ENCODE measurements at regions of chr6 and their contacts with region 1.

Region 1: GRCh38 chr6:52284460-52285176 is at the start of gene MCM3:
- H3K4me3 Mint-ChIP-seq: no peak within 1 kb of the TSS
- H3K27ac Mint-ChIP-seq: no peak within 1 kb of the TSS
- H3K4me1 Mint-ChIP-seq: peaks cover 13% of the 10 kb centered on the region
- H3K27me3 Mint-ChIP-seq: no peaks in the 10 kb centered on the region

Region 2: GRCh38 chr6:52304983-52305390 is 20.4 kb after region 1 on chr6:
- intact Hi-C with region 1: loop called (anchors 1 kb)
- H3K4me3 Mint-ChIP-seq: peak overlapping the region; percentile 26
- H3K27ac Mint-ChIP-seq: peak overlapping the region; percentile 94
- H3K4me1 Mint-ChIP-seq: peaks cover 56% of the 10 kb centered on the region
- H3K27me3 Mint-ChIP-seq: no peaks in the 10 kb centered on the region

Region 3: GRCh38 chr6:52361945-52362442 is 77.4 kb after region 1 on chr6 and contains the start of gene PAQR8:
- intact Hi-C with region 1: loop called (anchors 1 kb)
- H3K4me3 Mint-ChIP-seq: peak within 1 kb of the TSS; percentile 99
- H3K27ac Mint-ChIP-seq: peak within 1 kb of the TSS; percentile 83
- H3K4me1 Mint-ChIP-seq: peaks cover 27% of the 10 kb centered on the region
- H3K27me3 Mint-ChIP-seq: no peaks in the 10 kb centered on the region

Region 4: DNA sequence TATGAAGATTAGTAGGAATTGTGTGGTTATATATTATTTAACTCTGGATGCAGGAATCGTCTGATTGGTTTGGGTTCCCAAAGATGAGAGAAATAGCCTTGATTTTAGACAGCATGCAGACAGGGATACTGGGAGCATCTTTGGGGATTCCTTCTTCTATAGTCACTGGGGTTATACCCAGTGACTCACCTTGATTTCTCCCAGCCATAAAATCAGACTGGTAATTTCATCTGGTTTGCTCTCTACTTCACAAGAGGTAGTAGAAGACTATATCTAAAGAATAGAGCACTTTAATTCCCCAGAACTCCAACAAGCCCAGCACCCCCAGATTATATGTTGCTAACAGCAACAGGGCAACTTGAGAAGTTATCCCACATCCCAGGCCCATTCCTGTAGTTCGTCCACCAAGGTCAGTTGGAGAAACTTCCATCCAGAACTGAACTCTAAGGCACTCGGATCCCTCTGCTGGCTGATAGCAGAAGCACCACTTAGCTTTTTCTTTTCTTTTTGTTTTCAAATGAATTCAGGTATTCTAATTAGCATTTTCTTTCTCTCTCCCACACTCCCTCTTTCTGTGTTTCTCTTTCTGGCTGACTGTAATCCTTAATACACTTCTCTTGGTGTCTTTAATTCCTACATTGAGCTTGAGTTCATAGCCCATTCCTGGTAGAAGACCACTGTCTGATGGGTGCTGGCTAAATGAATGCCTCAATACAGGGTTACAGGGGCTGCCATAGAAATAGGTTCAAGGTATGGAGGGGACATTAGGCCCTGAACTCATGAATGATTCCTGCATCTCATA is 115.1 kb after region 1 on chr6:
- intact Hi-C with region 1: loop called (anchors 1 kb)
- H3K4me3 Mint-ChIP-seq: no peak overlapping the region
- H3K27ac Mint-ChIP-seq: no peak overlapping the region
- H3K4me1 Mint-ChIP-seq: peaks cover 16% of the 10 kb centered on the region
- H3K27me3 Mint-ChIP-seq: no peaks in the 10 kb centered on the region

Region 5: GRCh38 chr6:52664186-52664990 is 379.8 kb after region 1 on chr6:
- intact Hi-C with region 1: loop called (anchors 5 kb)
- H3K4me3 Mint-ChIP-seq: no peak overlapping the region
- H3K27ac Mint-ChIP-seq: no peak overlapping the region
- H3K4me1 Mint-ChIP-seq: no peaks in the 10 kb centered on the region
- H3K27me3 Mint-ChIP-seq: peaks cover 17% of the 10 kb centered on the region